ENCODE measurements at regions of chr19 and their contacts with region 1.

Region 1: DNA sequence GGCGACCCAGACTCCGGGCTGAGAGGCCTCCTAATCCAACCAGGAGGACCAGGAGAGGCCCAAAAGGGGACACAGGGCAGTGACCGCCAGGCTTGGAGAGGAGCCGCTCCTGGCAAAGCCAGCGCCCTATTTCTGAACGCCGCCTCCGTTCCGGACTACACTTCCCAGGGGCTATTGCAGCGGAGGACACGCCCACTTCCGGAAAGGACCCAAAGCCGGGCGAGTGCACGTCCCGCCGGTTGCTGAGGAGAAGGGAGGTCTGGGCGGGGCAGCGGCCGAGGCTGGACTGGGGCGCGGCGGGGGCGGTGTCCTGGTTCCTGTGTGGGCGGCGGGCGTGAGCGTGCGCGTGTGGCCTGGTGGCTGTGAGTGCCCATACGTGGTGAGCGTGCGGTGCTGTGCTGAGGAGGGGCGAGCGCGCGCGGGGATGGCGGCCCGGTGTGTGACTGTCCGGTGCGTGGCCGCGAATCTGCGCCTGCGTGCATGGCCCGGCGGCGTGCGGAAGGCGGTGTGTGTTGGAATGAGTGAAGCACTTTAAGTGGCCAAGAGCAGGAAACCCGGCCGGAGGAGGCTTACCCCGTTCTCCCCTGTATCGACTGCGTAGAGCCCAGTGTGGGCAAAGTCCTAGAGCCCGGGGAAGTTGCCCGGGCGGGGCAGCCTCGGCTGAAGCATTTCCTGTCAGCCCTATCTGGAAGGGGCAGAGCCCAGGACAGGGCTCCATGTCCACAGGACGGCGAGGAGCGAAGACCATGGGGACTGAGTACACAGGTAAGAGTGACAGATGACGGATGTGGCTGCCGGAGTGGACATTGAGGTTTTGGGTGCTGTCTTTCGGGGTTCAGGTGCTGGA is at the start of gene ZNF470:
- DNase-seq: peak; percentile 82
- H3K4me3 Mint-ChIP-seq: peak within 1 kb of the TSS; percentile 87
- H3K27ac Mint-ChIP-seq: peak within 1 kb of the TSS; percentile 89
- H3K4me1 Mint-ChIP-seq: no peaks in the 10 kb centered on the region
- H3K27me3 Mint-ChIP-seq: no peaks in the 10 kb centered on the region
- total RNA-seq, gene ZNF470: 1.2 and 2.4 TPM in 2 replicates

Region 2: DNA sequence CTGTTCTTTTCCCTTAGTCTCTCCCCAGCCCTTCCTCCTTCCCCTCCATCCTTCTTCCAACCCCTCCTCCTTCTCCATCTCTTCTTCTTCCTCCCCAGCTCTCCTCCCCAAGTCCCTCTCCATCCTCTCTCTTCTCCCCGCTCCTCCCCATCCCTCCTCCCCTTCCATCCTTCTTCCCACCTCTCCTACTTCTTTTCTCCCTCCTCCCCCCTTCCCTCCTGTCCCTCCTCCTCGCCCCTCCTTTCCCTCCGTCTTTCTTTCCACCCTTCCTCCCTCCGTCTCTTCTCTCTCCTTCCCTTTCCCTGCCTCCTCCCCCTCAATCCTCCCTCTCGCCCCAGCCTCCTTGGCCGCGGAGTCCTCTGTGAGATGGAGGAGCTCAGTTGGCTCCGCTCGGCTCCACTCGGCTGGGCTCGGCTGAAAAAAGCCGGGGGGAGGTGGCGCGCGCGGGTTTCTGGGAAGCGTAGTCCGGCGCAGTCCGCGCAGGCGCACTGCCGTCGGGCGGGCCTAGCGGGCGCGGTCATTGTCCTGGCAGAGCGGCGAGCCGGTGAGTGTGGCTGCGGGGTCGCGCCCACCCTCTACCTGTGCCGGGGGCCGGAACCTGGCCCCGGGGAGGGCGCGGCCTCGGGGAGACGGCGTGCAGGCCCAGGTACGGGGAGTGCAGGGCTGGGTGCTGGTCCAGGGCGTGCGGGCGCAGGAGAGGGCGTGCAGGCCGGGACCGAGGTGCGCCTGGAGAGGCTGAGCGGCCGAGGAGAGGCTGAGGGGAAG is 27.5 kb after region 1 on chr19 and contains the start of gene ZNF71:
- intact Hi-C with region 1: loop called (anchors 1 kb)
- DNase-seq: peak; percentile 82
- H3K4me3 Mint-ChIP-seq: peak within 1 kb of the TSS; percentile 92
- H3K27ac Mint-ChIP-seq: peak within 1 kb of the TSS; percentile 59
- H3K4me1 Mint-ChIP-seq: peaks cover 14% of the 10 kb centered on the region
- H3K27me3 Mint-ChIP-seq: no peaks in the 10 kb centered on the region
- total RNA-seq, gene ZNF71: 5.1 and 5.9 TPM in 2 replicates

Region 3: GRCh38 chr19:56633021-56633420 is 65.5 kb after region 1 on chr19:
- intact Hi-C with region 1: no loop called
- DNase-seq: no peak
- H3K4me3 Mint-ChIP-seq: no peak overlapping the region
- H3K27ac Mint-ChIP-seq: no peak overlapping the region
- H3K4me1 Mint-ChIP-seq: no peaks in the 10 kb centered on the region
- H3K27me3 Mint-ChIP-seq: no peaks in the 10 kb centered on the region

Region 4: DNA sequence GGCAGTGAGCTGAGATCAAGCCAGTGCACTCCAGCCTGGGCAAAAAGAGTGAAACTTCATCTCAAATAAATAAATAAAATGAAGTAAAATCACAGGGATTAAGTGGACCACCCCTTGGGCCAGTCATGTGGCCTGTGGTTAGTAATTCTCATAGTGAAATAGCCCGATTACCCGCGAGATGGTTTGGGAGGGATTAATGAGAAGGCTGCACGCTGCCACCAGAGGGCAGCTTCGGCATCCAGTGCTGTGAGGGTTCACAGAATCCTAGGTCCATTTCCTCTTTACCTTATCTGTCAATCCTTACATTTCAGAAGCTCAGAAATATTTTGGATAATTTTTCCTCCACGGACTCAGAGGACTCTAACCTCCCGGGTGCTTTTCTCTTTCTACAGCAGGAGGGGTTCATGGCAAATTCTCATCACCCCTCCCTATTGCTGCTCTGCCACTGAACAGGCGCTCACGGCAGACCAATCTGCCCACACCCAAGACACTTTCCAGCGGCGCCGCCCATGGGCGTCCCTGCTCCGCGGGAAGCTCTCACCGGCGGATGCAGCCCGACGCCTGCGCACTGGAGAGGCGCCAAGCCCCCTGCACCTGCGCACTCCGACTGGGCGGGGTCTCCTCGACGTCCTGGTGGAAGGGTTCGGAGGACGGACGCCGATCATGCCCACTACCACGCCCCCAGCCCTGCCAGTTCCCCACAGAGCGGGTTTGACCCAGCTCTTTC is 93.0 kb after region 1 on chr19:
- intact Hi-C with region 1: no loop called
- DNase-seq: no peak
- H3K4me3 Mint-ChIP-seq: no peak overlapping the region
- H3K27ac Mint-ChIP-seq: no peak overlapping the region
- H3K4me1 Mint-ChIP-seq: no peaks in the 10 kb centered on the region
- H3K27me3 Mint-ChIP-seq: no peaks in the 10 kb centered on the region

Measured in activated T-helper 1 cell treated with anti-CD3 and anti-CD28 coated beads, Interleukin-12 subunit alpha, Interleukin-12 subunit beta, Interleukin-2, Interleukin-4 antibody, amounts not matched to agents 30 ng/mL and 10 ng/mL and 1 ng/mL, durations not matched to agents 14 hours and 24 hours and 36 hours (primary cell).